ENCODE measurements at regions of chr12 and their contacts with region 1.

Region 1: DNA sequence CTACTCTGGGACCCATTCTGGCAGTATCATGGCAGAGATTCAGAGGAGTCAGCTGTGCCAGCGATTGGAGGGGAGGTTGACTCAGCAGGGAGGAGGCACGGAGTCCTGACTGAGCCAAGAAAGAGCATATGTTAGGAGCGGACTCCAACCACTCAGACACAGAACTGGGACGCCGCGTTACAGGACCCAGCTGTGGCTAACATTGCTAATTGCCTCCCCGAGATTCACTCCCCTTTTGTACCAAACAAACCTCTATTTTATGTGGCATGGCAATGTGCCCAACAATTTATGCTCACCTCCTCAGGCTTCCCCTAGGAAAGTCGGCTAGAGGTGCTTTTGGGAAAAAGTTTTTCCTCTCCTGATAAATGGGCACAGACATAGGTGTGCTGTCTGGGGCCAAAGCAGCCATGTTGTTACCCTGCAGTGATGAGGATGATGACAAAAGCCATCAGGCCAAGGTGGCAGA is 15.2 kb upstream of the CLIP1 start:
- DNase-seq: peak; percentile 37 to 67 (median 49)
- H3K4me3 ChIP-seq: no peak overlapping the region
- H3K27ac ChIP-seq: no peak overlapping the region
- H3K4me1 ChIP-seq: peaks cover 6% of the 10 kb centered on the region
- H3K27me3 ChIP-seq: no peaks in the 10 kb centered on the region
- CTCF ChIP-seq: no peak
- EP300 ChIP-seq: no peak
- POLR2A ChIP-seq: no peak

Region 2: DNA sequence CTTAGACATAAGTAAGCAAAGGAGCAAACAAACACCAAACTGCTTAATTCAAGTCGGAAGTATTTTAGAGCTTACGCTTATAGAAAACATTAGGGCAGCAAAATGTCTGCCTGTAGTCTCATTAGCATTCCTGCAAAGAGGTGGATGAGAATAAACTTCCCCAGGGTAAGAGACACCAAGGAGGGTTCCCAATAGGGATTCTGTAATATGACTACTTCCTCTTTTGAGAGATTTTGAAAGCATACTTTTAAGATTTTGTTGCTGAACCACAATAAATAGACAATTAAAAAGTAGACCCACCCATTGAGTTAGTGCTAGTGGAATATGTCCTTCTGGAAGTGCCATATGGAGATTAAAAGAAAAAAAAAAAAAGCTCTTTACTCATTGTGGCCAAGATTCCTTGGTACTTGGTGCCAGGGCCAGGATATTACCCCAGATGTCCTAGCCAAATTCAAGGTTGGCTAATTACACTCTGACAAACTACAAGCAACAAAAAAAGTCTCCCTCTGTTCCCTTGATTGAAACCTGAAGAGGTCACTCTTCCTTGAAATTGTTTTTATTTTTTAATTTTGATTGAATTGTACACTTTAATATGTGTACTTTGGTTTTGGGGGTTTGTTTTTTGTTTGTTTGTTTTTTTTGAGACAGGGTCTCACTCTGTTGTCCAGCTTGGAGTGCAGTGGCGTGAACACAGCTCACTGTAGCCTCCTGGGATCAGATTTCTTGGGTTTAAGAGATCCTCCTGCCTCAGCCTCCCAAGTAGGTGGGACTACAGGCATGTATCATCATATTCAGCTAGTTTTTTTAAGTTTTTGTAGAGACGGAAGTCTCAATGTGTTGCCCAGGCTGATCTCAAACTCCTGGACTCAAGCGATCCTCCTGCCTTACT is 23.9 kb before region 1 on chr12:
- intact Hi-C with region 1: no loop called
- DNase-seq: no peak
- H3K4me3 ChIP-seq: no peak overlapping the region
- H3K27ac ChIP-seq: no peak overlapping the region
- H3K4me1 ChIP-seq: no peaks in the 10 kb centered on the region
- H3K27me3 ChIP-seq: no peaks in the 10 kb centered on the region
- CTCF ChIP-seq: no peak
- EP300 ChIP-seq: no peak
- POLR2A ChIP-seq: no peak

Region 3: GRCh38 chr12:122454245-122455138 is 16.8 kb after region 1 on chr12:
- intact Hi-C with region 1: loop called in 1 of 4 experiments (anchors 2 kb)
- DNase-seq: no peak
- H3K4me3 ChIP-seq: no peak overlapping the region
- H3K27ac ChIP-seq: no peak overlapping the region
- H3K4me1 ChIP-seq: no peaks in the 10 kb centered on the region
- H3K27me3 ChIP-seq: no peaks in the 10 kb centered on the region
- CTCF ChIP-seq: no peak
- EP300 ChIP-seq: no peak
- POLR2A ChIP-seq: no peak